Posterior vena cava (tissue), 2 donors: ENCODE measurements at regions of chr16 and their contacts with region 1.

Region 1: GRCh38 chr16:49855280-49855821 is 561 bp downstream of the ZNF423 start:
- DNase-seq: peak; percentile 95

Region 2: DNA sequence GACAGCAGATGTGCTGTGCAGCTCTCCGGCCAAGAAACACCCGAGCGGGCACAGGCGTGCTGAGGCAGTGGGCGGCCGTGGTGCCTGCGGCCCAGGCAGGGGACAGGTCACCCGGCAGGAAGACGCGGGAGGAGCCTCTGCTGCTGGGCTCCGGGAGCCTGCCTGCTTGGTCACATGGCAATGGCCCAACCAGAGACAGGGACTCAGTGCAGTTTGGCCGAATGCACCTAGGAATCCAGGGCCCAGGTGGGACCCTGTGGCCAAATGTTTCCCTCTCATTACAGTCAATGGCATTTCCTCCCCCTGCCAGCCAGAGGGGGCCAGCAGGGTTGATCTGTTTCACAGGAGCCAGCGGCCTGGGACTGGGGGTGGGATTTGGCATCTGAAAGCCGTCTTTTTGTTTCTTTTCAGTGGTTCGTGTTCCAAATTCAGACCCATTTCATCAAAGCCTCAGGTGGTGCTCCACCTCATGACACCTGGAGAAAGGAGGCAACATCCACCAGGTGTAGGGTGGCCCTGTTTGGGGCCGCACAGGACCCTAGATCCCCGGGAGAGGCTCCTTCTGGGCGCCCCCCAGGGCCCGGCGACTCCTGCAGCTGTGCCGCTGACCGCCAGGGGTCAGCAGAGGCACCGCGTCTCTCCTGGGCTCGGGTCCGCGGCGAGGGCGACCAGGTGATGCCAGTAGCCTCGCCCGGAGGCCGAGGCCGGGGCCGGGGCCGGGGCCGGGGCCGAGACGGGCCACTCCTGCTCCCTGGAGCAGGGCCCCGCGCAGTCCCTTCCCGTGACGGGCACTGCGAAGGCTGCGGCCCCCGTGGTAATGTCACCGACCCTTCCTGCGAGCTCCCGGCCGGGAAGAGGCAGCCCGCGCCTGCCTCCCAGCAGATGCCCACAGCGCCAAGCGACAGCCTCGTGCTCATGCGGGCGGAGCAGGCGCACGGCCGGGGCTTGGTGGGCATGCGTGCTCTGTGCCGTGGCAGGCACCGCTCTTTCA is 363.3 kb before region 1 on chr16:
- intact Hi-C with region 1: loop called (anchors 5 to 10 kb)
- DNase-seq: peak; percentile 83

Region 3: GRCh38 chr16:49620158-49620868 is 235.0 kb before region 1 on chr16:
- intact Hi-C with region 1: loop called in 1 of 2 experiments (anchors 5 kb)
- DNase-seq: peak; percentile 94

Region 4: GRCh38 chr16:49701789-49702494 is 153.4 kb before region 1 on chr16:
- intact Hi-C with region 1: loop called in 1 of 2 experiments (anchors 5 kb)
- DNase-seq: peak; percentile 91

Region 5: DNA sequence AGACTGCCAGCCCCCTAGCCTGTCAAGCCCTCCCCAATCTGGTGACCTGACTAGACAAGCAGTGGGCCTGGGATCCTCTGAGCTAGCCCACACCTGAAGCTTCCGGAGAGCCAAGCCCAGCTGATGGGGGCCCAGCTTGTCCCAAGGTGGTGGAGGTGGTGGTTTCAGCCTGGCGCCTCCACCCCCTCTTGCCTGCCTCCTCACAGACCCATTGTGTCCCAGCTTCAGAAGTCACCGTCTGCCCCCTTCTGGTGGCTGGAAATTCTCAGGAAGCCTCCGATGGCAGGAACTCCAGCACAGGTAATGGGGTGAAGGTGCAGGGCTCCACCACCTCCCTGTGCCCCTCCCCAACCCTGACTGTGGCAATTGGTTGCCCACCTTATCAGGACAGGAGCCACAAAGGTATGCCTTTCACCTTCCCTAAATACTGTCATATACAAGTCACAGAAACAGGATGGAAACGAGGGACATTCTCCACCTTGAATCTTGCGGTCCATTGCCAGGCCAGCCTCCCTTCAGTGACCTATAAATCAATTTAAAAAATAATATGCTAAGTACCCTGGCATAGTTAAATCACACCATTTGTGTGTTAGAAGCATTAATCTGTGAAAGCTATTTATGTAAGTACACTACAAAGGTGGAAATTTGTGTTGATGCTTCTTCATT is 66.6 kb after region 1 on chr16:
- intact Hi-C with region 1: no loop called
- DNase-seq: peak; percentile 84